Psoas muscle (tissue), 8 donors: ENCODE measurements at regions of chr17 and their contacts with region 1.

Region 1: GRCh38 chr17:1724506-1725362 is at the start of gene WDR81:
- DNase-seq: peak; percentile 95 to 97
- ATAC-seq: peak; percentile 72 to 86 (median 81)
- H3K4me3 ChIP-seq: peak within 1 kb of the TSS; percentile 82
- H3K27ac ChIP-seq: peak within 1 kb of the TSS; percentile 94
- H3K4me1 ChIP-seq: peaks cover 57% of the 10 kb centered on the region
- H3K27me3 ChIP-seq: no peaks in the 10 kb centered on the region
- CTCF ChIP-seq: peak; percentile 15
- total RNA-seq, gene WDR81: 15.1 to 23.7 (median 20.8) TPM

Region 2: GRCh38 chr17:1764284-1764683 is 39.5 kb after region 1 on chr17:
- intact Hi-C with region 1: loop called (anchors 2 to 5 kb)
- DNase-seq: peak; percentile 77 to 89
- ATAC-seq: peak; percentile 19 to 42 (median 32)
- H3K4me3 ChIP-seq: peak overlapping the region; percentile 71
- H3K27ac ChIP-seq: peak overlapping the region; percentile 92
- H3K4me1 ChIP-seq: peaks cover 51% of the 10 kb centered on the region
- H3K27me3 ChIP-seq: no peaks in the 10 kb centered on the region
- CTCF ChIP-seq: no peak

Region 3: DNA sequence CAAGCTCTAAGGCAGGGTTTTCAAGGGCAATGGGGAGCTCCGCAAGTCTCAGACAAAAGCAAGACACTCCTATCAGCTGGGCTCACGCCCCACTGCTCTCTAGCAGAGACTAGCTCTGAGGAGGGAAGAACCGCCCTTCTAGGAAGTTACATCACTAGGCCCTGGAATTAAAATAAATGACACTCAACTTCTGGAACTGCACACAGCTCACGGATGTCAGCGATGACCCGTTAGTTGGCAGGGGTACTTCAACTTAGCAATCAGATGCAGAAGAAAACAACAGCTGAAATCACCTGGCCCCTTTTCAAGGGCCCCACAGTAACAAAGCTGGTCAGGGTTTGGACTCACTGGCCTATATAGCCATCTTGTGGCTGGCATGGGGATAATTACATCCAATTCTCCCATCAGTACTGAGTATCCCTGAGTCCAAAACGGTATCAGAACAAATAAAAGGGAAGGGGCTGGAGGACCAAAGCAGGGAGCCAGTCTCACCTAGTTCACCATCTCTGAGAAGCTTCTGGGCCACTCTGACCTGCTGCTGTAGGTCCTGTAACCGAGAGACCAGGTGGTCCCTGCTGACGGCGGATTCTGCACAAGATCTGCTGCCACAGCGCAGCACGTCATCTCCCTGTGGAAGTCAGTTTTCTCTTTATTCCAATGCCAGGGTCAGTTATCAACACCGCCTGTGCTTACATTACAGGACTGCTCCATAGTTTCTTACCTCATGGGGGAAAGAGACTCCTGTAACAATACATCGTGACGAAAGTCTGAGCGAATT is 59.3 kb after region 1 on chr17:
- intact Hi-C with region 1: loop called in 1 of 2 experiments (anchors 1 kb)
- DNase-seq: peak; percentile 87 to 93
- ATAC-seq: peak; percentile 84 to 85 (median 85)
- H3K4me3 ChIP-seq: peak overlapping the region; percentile 58
- H3K27ac ChIP-seq: peak overlapping the region; percentile 99
- H3K4me1 ChIP-seq: peaks cover 72% of the 10 kb centered on the region
- H3K27me3 ChIP-seq: no peaks in the 10 kb centered on the region
- CTCF ChIP-seq: peak; percentile 82